ENCODE measurements at regions of chr6 and their contacts with region 1.

Region 1: GRCh38 chr6:128655978-128656498 is 135.6 kb upstream of the PTPRK start:
- DNase-seq: peak; percentile 50
- H3K4me3 Mint-ChIP-seq: no peak overlapping the region
- H3K27ac Mint-ChIP-seq: peak overlapping the region; percentile 69
- H3K4me1 Mint-ChIP-seq: peaks cover 31% of the 10 kb centered on the region
- H3K27me3 Mint-ChIP-seq: peaks cover under 1% of the 10 kb centered on the region

Region 2: GRCh38 chr6:127484212-127484858 is 1171.7 kb before region 1 on chr6:
- CTCF ChIA-PET with region 1: no interaction called
- intact Hi-C with region 1: loop called (anchors 1 kb)
- DNase-seq: peak; percentile 11
- H3K4me3 Mint-ChIP-seq: no peak overlapping the region
- H3K27ac Mint-ChIP-seq: no peak overlapping the region
- H3K4me1 Mint-ChIP-seq: peaks cover 28% of the 10 kb centered on the region
- H3K27me3 Mint-ChIP-seq: peaks cover 4% of the 10 kb centered on the region

Region 3: DNA sequence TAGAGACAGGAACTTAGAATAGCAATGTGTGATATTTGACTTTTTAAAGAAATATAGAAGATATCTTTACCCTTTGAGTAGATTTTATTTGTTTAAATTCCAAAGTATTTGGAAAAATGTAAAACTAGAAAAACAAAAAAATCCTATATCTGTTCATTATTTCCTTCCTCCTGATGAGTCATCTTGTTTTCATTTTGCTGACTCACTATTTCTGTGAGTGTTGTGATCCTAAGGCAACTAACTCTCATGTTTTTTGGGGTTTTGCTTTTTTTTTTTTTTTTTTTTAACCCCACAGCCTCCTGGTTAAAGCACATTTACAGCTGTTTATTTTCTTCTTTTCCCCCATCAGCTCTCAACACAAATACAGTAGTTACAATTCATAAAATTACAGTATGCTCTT is 717.3 kb before region 1 on chr6:
- CTCF ChIA-PET with region 1: no interaction called
- intact Hi-C with region 1: loop called (anchors 1 kb)
- DNase-seq: no peak
- H3K4me3 Mint-ChIP-seq: no peak overlapping the region
- H3K27ac Mint-ChIP-seq: no peak overlapping the region
- H3K4me1 Mint-ChIP-seq: peaks cover 60% of the 10 kb centered on the region
- H3K27me3 Mint-ChIP-seq: no peaks in the 10 kb centered on the region

Region 4: DNA sequence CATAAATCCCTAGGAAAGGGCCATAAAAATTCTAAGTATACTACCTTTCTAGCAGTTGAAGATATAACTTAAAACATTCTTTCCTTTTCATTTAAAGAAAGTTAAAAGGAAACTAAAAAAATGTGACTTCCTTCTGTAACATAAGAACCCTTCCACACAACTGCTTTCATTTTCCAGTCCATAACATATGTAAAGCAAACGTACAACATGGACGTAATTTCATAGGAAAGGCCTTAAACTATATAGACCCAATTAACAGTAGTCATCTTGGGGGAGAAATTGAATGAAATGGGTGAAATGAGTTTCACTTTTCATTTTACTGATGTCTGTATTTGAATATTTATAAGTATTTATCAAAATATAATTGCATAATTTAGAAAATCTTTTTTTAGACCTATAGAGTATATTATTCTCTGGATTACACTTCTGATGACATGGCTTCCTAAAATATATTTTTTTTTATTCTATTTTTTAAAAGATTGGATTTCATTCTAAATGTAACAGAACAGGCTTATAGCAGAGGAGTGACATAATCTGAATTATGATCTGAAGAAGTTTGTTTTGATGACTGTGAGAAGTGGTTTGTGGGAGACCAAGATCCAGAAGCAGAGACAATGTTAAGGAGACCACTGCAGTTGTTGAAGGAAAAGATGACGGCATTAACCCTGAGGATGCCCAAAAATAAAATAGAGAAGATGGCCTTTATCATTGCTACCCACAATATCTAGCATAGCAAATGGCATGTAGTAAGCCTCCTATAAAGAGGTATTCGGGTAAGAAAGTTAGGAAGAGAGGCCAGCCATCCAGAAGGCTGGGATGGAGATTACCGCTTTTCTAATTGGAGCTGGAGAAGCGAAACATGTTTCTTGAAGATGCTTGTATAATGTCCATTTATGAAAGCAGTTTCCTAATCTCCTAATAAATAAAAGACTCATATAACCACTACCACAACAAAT is 396.0 kb before region 1 on chr6:
- CTCF ChIA-PET with region 1: no interaction called
- intact Hi-C with region 1: loop called (anchors 1 kb)
- DNase-seq: no peak
- H3K4me3 Mint-ChIP-seq: peak overlapping the region; percentile 60
- H3K27ac Mint-ChIP-seq: peak overlapping the region; percentile 46
- H3K4me1 Mint-ChIP-seq: peaks cover 22% of the 10 kb centered on the region
- H3K27me3 Mint-ChIP-seq: no peaks in the 10 kb centered on the region

Region 5: DNA sequence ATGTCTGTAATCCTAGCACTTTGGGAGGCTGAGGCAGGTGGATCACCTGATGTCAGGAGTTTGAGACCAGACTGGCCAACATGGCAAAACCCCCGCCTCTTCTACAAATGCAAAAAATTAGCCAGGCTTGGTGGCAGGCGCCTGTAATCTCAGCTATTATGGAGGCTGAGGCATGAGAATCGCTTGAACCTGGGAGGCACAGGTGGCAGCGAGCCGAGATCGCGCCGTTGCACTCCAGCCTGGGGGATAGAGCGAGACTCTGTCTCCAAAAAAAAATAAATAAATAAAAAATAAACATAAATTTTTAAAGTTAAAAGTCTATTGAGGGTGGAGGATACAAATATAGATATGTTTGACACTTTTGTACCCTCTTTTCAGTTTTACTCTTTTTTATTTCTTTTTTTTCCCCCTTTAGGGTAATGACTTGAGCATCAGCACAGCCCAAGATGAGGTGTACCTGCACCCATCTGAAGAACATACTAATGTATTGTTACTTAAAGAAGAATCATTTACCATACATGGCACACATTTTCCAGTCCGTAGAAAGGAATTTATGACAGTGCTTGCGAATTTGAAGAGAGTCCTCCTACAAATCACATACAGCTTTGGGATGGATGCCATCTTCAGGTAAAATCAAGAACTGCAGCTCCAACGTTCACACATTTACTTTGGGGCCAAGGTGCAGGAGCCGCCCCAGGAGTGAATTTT is 595.8 kb after region 1 on chr6:
- CTCF ChIA-PET with region 1: no interaction called
- intact Hi-C with region 1: loop called (anchors 2 kb)
- DNase-seq: peak; percentile 76
- H3K4me3 Mint-ChIP-seq: no peak overlapping the region
- H3K27ac Mint-ChIP-seq: no peak overlapping the region
- H3K4me1 Mint-ChIP-seq: peaks cover 23% of the 10 kb centered on the region
- H3K27me3 Mint-ChIP-seq: peaks cover 13% of the 10 kb centered on the region

Region 6: GRCh38 chr6:129490521-129491245 is 834.6 kb after region 1 on chr6:
- CTCF ChIA-PET with region 1: no interaction called
- intact Hi-C with region 1: loop called (anchors 1 kb)
- DNase-seq: peak; percentile 79
- H3K4me3 Mint-ChIP-seq: peak overlapping the region; percentile 67
- H3K27ac Mint-ChIP-seq: peak overlapping the region; percentile 100
- H3K4me1 Mint-ChIP-seq: peaks cover 70% of the 10 kb centered on the region
- H3K27me3 Mint-ChIP-seq: no peaks in the 10 kb centered on the region

Region 7: GRCh38 chr6:130020907-130021629 is 1365.0 kb after region 1 on chr6:
- CTCF ChIA-PET with region 1: no interaction called
- intact Hi-C with region 1: loop called (anchors 10 kb)
- DNase-seq: peak; percentile 90
- H3K4me3 Mint-ChIP-seq: peak overlapping the region; percentile 92
- H3K27ac Mint-ChIP-seq: peak overlapping the region; percentile 84
- H3K4me1 Mint-ChIP-seq: peaks cover 29% of the 10 kb centered on the region
- H3K27me3 Mint-ChIP-seq: no peaks in the 10 kb centered on the region

Measured in activated naive CD4-positive, alpha-beta T cell treated with anti-CD3 and anti-CD28 coated beads for 36 hours (primary cell).